Activated CD8-positive, alpha-beta T cell treated with anti-CD3 and anti-CD28 coated beads, Interleukin-2, amount 10 ng/mL, durations not matched to agents 7 days and 5 days (primary cell): ENCODE measurements at regions of chr17 and their contacts with region 1.

Region 1: GRCh38 chr17:7687908-7688807 is at the start of gene WRAP53:
- DNase-seq: peak; percentile 97
- ATAC-seq: peak; percentile 85
- H3K4me3 Mint-ChIP-seq: peak within 1 kb of the TSS; percentile 98
- H3K27ac Mint-ChIP-seq: peak within 1 kb of the TSS; percentile 100
- H3K4me1 Mint-ChIP-seq: peaks cover 40% of the 10 kb centered on the region
- H3K27me3 Mint-ChIP-seq: no peaks in the 10 kb centered on the region
- total RNA-seq, gene WRAP53: 27.1 to 29.3 TPM

Region 2: GRCh38 chr17:7435221-7435675 is 252.9 kb before region 1 on chr17 and contains the start of gene TMEM102:
- CTCF ChIA-PET with region 1: interaction called, 36 read pairs
- POLR2A ChIA-PET with region 1: interaction called, 19 read pairs
- DNase-seq: peak; percentile 99
- ATAC-seq: peak; percentile 73
- H3K4me3 Mint-ChIP-seq: peak within 1 kb of the TSS; percentile 95
- H3K27ac Mint-ChIP-seq: peak within 1 kb of the TSS; percentile 98
- H3K4me1 Mint-ChIP-seq: peaks cover 38% of the 10 kb centered on the region
- H3K27me3 Mint-ChIP-seq: peaks cover 10% of the 10 kb centered on the region
- total RNA-seq, gene TMEM102: 16.5 to 18.1 TPM

Region 3: DNA sequence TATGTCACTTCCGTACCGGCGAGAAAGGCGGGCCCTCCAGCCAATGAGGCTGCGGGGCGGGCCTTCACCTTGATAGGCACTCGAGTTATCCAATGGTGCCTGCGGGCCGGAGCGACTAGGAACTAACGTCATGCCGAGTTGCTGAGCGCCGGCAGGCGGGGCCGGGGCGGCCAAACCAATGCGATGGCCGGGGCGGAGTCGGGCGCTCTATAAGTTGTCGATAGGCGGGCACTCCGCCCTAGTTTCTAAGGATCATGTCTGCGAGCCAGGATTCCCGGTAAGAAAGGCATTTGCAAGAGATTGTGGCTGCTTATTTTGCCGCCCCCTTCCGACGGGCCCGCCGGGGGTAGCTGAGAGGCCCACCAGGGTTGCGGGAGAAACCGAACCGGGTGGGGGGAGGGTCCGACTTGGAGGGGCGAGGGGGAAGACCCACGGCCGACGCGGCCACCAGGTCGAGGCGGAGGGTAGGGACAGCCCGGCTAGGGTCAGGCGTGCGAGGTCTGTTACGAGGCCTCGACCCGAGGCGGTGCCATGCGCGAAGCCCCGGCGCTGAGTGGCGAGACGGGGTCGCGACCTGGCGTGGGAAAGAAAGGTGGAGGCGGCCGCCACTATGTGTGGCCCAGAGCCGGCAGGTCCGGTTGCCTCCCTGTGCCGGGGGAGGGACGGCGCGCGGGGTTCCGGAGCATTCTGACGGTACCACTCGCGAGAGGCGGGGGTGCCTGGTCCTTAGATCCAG is 115.4 kb before region 1 on chr17:
- CTCF ChIA-PET with region 1: interaction called, 23 read pairs
- POLR2A ChIA-PET with region 1: interaction called, 50 read pairs
- DNase-seq: no peak
- ATAC-seq: peak; percentile 13
- H3K4me3 Mint-ChIP-seq: peak overlapping the region; percentile 93
- H3K27ac Mint-ChIP-seq: peak overlapping the region; percentile 100
- H3K4me1 Mint-ChIP-seq: peaks cover 62% of the 10 kb centered on the region
- H3K27me3 Mint-ChIP-seq: no peaks in the 10 kb centered on the region

Region 4: GRCh38 chr17:7632492-7632894 is 55.7 kb before region 1 on chr17:
- CTCF ChIA-PET with region 1: interaction called, 129 read pairs
- POLR2A ChIA-PET with region 1: interaction called, 101 read pairs
- DNase-seq: peak; percentile 62
- ATAC-seq: no peak
- H3K4me3 Mint-ChIP-seq: no peak overlapping the region
- H3K27ac Mint-ChIP-seq: no peak overlapping the region
- H3K4me1 Mint-ChIP-seq: peaks cover 4% of the 10 kb centered on the region
- H3K27me3 Mint-ChIP-seq: no peaks in the 10 kb centered on the region

Region 5: GRCh38 chr17:7703584-7704479 is 15.7 kb after region 1 on chr17:
- CTCF ChIA-PET with region 1: interaction called, 9 read pairs
- POLR2A ChIA-PET with region 1: interaction called, 37 read pairs
- DNase-seq: no peak
- ATAC-seq: peak; percentile 50
- H3K4me3 Mint-ChIP-seq: no peak overlapping the region
- H3K27ac Mint-ChIP-seq: no peak overlapping the region
- H3K4me1 Mint-ChIP-seq: peaks cover 13% of the 10 kb centered on the region
- H3K27me3 Mint-ChIP-seq: peaks cover 38% of the 10 kb centered on the region

Region 6: DNA sequence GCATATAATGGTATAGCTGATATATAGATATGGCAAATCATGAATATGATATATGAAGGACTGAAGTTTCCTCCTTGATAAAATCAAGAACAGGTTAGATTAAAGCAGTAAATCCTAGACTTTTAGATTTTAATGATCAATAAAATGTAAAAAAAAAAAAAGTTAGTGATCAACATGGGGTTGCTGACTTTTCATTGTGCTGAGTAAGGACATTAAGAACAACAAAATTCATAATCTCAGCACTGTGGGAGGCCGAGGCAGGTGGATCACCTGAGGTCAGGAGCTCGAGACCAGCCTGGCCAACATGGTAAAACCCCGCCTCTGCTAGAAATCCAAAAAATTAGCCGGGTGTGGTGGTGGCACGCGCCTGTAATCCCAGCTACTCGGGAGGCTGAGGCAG is 190.1 kb after region 1 on chr17:
- CTCF ChIA-PET with region 1: no interaction called
- POLR2A ChIA-PET with region 1: no interaction called
- DNase-seq: no peak
- ATAC-seq: no peak
- H3K4me3 Mint-ChIP-seq: no peak overlapping the region
- H3K27ac Mint-ChIP-seq: no peak overlapping the region
- H3K4me1 Mint-ChIP-seq: no peaks in the 10 kb centered on the region
- H3K27me3 Mint-ChIP-seq: no peaks in the 10 kb centered on the region

Region 7: DNA sequence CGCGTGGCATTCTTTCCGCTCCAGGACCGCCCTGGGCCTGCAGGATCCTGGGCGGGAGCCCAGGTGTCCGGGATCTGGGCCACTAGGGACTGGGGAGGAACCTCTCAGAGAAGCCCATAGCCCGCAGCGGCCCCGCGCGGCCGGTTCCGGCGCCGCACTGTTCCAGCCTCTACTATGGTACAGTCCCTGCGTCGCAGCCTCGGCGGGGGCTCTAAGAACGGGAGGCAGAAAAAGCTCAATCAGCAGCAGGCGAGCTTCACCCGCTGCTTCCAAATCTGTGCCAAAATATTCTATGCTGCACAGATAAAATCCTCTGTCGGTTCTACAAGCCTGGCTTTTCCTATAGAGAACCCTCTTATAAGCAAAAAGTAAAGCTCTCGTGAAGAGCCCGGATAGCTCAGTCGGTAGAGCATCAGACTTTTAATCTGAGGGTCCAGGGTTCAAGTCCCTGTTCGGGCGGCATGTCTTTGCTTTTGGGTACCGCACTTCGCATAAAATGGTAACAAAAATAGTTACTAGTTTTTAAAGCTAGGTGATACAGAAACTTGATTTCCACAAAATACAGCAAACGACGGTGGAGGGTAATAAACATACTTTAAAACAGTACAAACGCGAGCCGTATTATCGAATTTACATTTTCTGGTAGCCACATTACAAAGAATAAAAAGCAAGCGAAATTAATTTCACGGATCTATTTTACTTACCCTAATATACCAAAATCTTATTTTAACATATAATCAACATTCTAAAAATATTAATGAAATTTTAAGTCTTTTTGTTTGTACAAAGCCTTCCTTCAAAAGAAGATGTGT is 430.8 kb after region 1 on chr17:
- CTCF ChIA-PET with region 1: interaction called, 10 read pairs
- POLR2A ChIA-PET with region 1: interaction called, 3 read pairs
- DNase-seq: peak; percentile 90
- ATAC-seq: peak; percentile 70
- H3K4me3 Mint-ChIP-seq: peak overlapping the region; percentile 89
- H3K27ac Mint-ChIP-seq: peak overlapping the region; percentile 95
- H3K4me1 Mint-ChIP-seq: peaks cover 51% of the 10 kb centered on the region
- H3K27me3 Mint-ChIP-seq: peaks cover 57% of the 10 kb centered on the region